ENCODE measurements at regions of chr1 and their contacts with region 1.

Region 1: GRCh38 chr1:95140791-95141190 is 23.6 kb downstream of the TLCD4 start:
- DNase-seq: no peak
- H3K4me3 ChIP-seq: no peak overlapping the region
- H3K27ac ChIP-seq: no peak overlapping the region
- H3K4me1 ChIP-seq: no peaks in the 10 kb centered on the region
- H3K27me3 ChIP-seq: no peaks in the 10 kb centered on the region
- CTCF ChIP-seq: no peak

Region 2: GRCh38 chr1:95169544-95169943 is 28.8 kb after region 1 on chr1:
- intact Hi-C with region 1: loop called (anchors 2 kb)
- DNase-seq: no peak
- H3K4me3 ChIP-seq: no peak overlapping the region
- H3K27ac ChIP-seq: no peak overlapping the region
- H3K4me1 ChIP-seq: no peaks in the 10 kb centered on the region
- H3K27me3 ChIP-seq: no peaks in the 10 kb centered on the region
- CTCF ChIP-seq: no peak

Measured in colonic mucosa (tissue), 4 donors.